Activated CD4-positive, alpha-beta T cell treated with anti-CD3 and anti-CD28 coated beads, Interleukin-2, amount 10 ng/mL, durations not matched to agents 24 days and 14 days (primary cell): ENCODE measurements at regions of chr19 and their contacts with region 1.

Region 1: GRCh38 chr19:37906869-37907734 is at the start of gene SIPA1L3:
- DNase-seq: peak; percentile 98
- H3K4me3 Mint-ChIP-seq: peak within 1 kb of the TSS; percentile 76
- H3K27ac Mint-ChIP-seq: peak within 1 kb of the TSS; percentile 79
- H3K4me1 Mint-ChIP-seq: peaks cover 18% of the 10 kb centered on the region
- H3K27me3 Mint-ChIP-seq: peaks cover 2% of the 10 kb centered on the region
- total RNA-seq, gene SIPA1L3: 15.2 and 15.4 TPM in 2 replicates

Region 2: DNA sequence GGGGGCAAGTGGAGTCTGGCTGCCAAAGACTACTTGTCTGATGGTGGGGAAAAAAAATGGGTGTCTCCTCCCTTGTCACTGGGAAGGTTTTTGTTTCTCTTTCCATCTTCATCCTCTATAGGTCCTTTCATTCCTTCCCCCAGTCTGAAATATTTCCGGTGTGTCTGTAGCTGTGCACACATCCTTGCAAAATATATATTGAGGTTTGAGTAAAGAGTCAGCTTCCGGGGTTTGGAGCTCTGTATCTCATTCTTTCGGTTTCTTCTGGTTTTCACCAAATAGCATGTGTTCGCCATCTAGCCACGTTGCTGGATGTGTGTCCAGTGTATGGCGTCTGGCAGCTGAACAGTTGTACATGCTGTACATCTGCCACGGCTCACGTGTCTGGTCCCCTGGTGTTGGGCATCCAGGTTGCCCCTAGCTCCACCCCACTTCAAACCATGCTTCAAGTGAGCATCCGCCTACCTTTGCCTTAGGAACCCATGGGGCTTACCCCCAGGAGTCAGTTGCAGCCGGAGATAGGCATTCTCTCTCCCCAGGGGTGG is 142.1 kb after region 1 on chr19:
- intact Hi-C with region 1: loop called (anchors 1 kb)
- DNase-seq: peak; percentile 89
- H3K4me3 Mint-ChIP-seq: peak overlapping the region; percentile 83
- H3K27ac Mint-ChIP-seq: peak overlapping the region; percentile 97
- H3K4me1 Mint-ChIP-seq: peaks cover 35% of the 10 kb centered on the region
- H3K27me3 Mint-ChIP-seq: no peaks in the 10 kb centered on the region

Region 3: DNA sequence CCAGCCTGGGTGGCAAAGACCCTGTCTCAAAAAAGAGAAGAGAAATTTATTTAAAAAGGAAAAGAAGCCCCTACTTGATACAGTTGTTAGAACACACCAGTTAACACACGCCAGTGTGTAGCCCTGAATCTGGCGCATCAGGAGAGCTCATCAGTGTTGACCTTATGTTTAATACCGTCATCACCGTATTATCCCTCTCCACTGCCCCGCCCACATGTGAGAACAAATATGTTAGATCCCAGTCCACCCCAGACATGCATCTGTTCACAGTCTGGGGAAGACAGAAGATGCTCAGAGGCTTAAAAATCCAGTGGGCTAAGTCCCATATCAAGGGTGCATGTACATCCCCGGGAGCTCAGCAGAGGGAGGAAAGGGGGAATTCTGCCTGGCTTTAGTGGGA is 161.7 kb after region 1 on chr19:
- intact Hi-C with region 1: no loop called
- DNase-seq: no peak
- H3K4me3 Mint-ChIP-seq: no peak overlapping the region
- H3K27ac Mint-ChIP-seq: no peak overlapping the region
- H3K4me1 Mint-ChIP-seq: peaks cover under 1% of the 10 kb centered on the region
- H3K27me3 Mint-ChIP-seq: no peaks in the 10 kb centered on the region

Region 4: GRCh38 chr19:38079926-38080380 is 172.9 kb after region 1 on chr19:
- intact Hi-C with region 1: loop called (anchors 1 kb)
- DNase-seq: no peak
- H3K4me3 Mint-ChIP-seq: peak overlapping the region; percentile 32
- H3K27ac Mint-ChIP-seq: peak overlapping the region; percentile 85
- H3K4me1 Mint-ChIP-seq: peaks cover 14% of the 10 kb centered on the region
- H3K27me3 Mint-ChIP-seq: no peaks in the 10 kb centered on the region

Region 5: DNA sequence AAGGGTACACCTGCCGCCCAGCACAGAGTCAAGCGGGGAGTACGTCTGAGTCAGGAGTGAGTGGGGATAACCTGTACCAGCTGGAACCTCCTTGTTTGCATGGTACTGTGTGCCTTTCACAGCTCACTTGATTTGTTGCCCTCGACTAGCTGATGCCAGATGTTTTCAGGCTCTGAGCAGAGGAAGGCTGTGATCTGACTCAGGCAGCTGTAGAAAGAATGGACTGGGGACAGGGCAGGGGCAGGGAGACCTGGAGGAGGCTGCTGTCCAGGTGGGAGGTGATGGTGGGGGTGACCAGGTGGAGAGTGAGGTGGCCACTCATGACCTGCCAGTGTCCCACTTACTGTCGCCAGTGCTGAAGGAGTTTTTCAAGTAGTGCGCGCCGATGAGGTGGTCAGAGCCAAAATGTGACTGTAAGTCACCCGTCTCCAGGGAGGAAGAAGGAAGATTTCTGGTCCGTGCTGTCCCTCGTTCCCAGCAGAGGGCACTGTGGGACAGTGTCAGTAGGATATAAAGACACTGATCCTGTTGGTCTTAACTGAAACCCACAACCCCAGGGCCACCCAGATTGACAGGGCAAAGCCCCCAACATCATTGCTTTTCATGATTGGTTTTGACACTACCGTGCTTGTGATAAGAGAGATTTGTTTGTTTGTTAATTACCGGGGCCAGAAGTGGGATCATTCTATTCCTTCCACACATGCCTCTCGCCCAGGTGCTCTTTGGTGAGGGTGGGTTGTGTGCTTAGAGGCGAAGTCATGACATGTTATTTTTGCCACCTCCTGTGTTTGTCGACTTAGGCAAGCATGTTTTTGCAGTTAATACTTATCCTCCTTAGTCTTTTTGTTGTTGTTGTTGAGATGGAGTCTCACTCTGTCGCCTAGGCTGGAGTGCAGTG is 188.6 kb after region 1 on chr19:
- intact Hi-C with region 1: loop called (anchors 2 kb)
- DNase-seq: peak; percentile 88
- H3K4me3 Mint-ChIP-seq: no peak overlapping the region
- H3K27ac Mint-ChIP-seq: no peak overlapping the region
- H3K4me1 Mint-ChIP-seq: no peaks in the 10 kb centered on the region
- H3K27me3 Mint-ChIP-seq: no peaks in the 10 kb centered on the region

Region 6: GRCh38 chr19:38142176-38143035 is 235.3 kb after region 1 on chr19:
- intact Hi-C with region 1: loop called (anchors 5 kb)
- DNase-seq: peak; percentile 77
- H3K4me3 Mint-ChIP-seq: no peak overlapping the region
- H3K27ac Mint-ChIP-seq: no peak overlapping the region
- H3K4me1 Mint-ChIP-seq: peaks cover 6% of the 10 kb centered on the region
- H3K27me3 Mint-ChIP-seq: no peaks in the 10 kb centered on the region

Region 7: GRCh38 chr19:38224014-38224862 is 317.1 kb after region 1 on chr19 and contains the start of gene DPF1:
- intact Hi-C with region 1: loop called (anchors 2 kb)
- DNase-seq: peak; percentile 88
- H3K4me3 Mint-ChIP-seq: peak within 1 kb of the TSS; percentile 88
- H3K27ac Mint-ChIP-seq: peak within 1 kb of the TSS; percentile 82
- H3K4me1 Mint-ChIP-seq: peaks cover 24% of the 10 kb centered on the region
- H3K27me3 Mint-ChIP-seq: peaks cover 58% of the 10 kb centered on the region
- total RNA-seq, gene DPF1: 1.8 and 2.0 TPM in 2 replicates

Region 8: GRCh38 chr19:38315657-38316476 is 408.8 kb after region 1 on chr19 and contains the start of gene YIF1B:
- intact Hi-C with region 1: loop called (anchors 1 kb)
- DNase-seq: peak; percentile 98
- H3K4me3 Mint-ChIP-seq: peak within 1 kb of the TSS; percentile 89
- H3K27ac Mint-ChIP-seq: peak within 1 kb of the TSS; percentile 94
- H3K4me1 Mint-ChIP-seq: peaks cover 47% of the 10 kb centered on the region
- H3K27me3 Mint-ChIP-seq: no peaks in the 10 kb centered on the region
- total RNA-seq, gene YIF1B: 83.4 and 84.7 TPM in 2 replicates